Activated CD4-positive, alpha-beta T cell treated with anti-CD3 and anti-CD28 coated beads for 36 hours (primary cell): ENCODE measurements at regions of chr12 and their contacts with region 1.

Region 1: DNA sequence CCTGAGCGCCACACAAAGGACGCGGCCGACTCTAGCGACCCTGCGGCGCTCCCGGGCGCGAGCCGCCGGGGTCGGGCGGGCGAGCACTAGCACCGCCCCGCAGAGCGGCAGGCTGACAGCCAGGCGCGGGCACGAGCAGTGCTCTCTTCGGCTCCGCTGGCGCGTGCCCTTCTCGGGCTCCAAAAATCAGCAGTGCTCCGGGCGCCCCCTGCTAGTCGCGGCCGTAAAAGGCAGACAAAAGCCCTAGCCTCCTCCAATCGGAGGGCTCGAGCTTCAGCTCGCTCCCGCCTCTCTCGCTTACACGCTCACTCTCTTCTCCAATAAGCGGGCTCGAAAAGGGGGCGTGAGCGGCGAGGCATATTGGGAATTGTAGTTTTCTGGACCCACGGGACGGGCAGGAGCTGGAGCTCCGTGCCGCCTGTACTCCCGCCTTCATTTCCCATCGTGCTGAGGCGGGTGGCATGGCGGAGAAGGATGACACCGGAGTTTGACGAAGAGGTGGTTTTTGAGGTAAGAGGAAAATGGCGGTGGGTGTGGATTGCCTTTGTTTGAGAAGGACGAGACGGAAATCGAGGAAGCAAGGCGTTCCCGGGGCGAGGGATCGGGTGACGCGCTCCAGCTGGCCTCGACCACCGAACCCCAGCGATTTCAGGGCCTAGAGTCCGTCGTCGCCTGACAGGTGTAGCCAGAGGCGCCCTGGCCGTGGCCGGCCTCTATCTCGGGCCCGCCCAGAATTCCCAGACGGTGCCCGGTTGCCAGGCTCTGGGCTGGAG is at the starts of genes FGD6 and VEZT:
- DNase-seq: peak; percentile 98
- ATAC-seq: peak; percentile 95
- H3K4me3 Mint-ChIP-seq: peak within 1 kb of the TSS; percentile 86
- H3K27ac Mint-ChIP-seq: peak within 1 kb of the TSS; percentile 93
- H3K4me1 Mint-ChIP-seq: peaks cover 31% of the 10 kb centered on the region
- H3K27me3 Mint-ChIP-seq: peaks cover 3% of the 10 kb centered on the region
- total RNA-seq, gene FGD6: 1.1 to 1.3 TPM
- total RNA-seq, gene VEZT: 55.8 to 72.7 TPM

Region 2: DNA sequence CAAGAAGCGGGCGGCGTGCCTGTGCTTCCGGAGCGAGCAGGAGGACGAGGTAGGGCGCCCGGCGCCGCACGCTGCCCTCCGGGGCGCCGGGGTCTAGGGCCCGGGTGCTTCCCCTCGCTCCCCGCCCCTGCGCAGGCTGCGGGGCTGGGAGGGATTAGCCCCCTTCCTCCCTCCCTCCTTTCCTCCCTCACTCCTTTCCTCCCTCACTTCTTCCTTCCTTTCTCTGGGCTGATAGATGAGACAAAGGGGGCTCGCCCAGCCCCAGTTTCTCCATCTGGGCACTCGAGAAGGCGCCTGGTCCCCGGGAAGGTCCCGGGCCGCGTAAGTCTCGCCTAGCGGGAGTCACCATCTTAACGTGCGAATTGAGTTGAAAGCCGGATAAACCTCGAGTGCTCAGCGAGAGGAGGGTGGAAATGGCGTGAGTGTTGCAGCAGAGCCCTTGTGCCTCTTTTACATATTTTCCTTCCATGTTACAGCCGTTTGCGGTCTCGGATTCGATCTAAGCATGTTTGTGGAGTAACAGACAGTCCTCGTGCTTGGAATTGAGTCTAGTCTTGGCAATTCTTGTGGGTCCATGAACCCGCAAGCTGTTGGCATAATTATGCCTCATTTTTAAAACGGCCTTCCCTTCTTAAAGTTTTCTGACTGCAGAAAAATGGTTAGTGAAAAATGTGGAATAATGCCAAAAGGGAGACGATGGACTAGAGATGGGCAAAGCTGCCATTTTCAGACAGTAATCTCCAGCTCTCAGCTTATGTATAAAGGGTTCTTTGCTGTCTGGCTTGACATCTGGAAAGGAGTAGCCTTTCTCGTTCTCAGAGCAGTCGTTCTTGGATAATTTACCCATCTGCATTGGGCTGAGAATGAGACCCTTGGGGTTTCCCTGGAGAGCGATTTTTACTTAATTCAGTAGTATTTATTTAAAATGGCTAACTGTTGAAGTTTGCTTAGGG is 1838.9 kb before region 1 on chr12:
- CTCF ChIA-PET with region 1: no interaction called
- POLR2A ChIA-PET with region 1: no interaction called
- intact Hi-C with region 1: loop called in 1 of 2 experiments (anchors 5 kb)
- DNase-seq: peak; percentile 76
- ATAC-seq: peak; percentile 66
- H3K4me3 Mint-ChIP-seq: peak overlapping the region; percentile 98
- H3K27ac Mint-ChIP-seq: peak overlapping the region; percentile 99
- H3K4me1 Mint-ChIP-seq: peaks cover 42% of the 10 kb centered on the region
- H3K27me3 Mint-ChIP-seq: no peaks in the 10 kb centered on the region

Region 3: GRCh38 chr12:95072900-95073697 is 144.5 kb before region 1 on chr12 and contains the start of gene NR2C1:
- CTCF ChIA-PET with region 1: no interaction called
- POLR2A ChIA-PET with region 1: interaction called, 6 read pairs
- intact Hi-C with region 1: loop called (anchors 1 to 2 kb)
- DNase-seq: peak; percentile 95
- ATAC-seq: peak; percentile 99
- H3K4me3 Mint-ChIP-seq: peak within 1 kb of the TSS; percentile 84
- H3K27ac Mint-ChIP-seq: peak within 1 kb of the TSS; percentile 82
- H3K4me1 Mint-ChIP-seq: peaks cover 12% of the 10 kb centered on the region
- H3K27me3 Mint-ChIP-seq: no peaks in the 10 kb centered on the region
- total RNA-seq, gene NR2C1: 27.6 to 39.3 TPM

Region 4: GRCh38 chr12:95262808-95263207 is 45.2 kb after region 1 on chr12:
- CTCF ChIA-PET with region 1: no interaction called
- POLR2A ChIA-PET with region 1: no interaction called
- intact Hi-C with region 1: no loop called
- DNase-seq: no peak
- ATAC-seq: no peak
- H3K4me3 Mint-ChIP-seq: no peak overlapping the region
- H3K27ac Mint-ChIP-seq: no peak overlapping the region
- H3K4me1 Mint-ChIP-seq: no peaks in the 10 kb centered on the region
- H3K27me3 Mint-ChIP-seq: no peaks in the 10 kb centered on the region

Region 5: GRCh38 chr12:95358111-95359083 is 140.8 kb after region 1 on chr12:
- CTCF ChIA-PET with region 1: no interaction called
- POLR2A ChIA-PET with region 1: no interaction called
- intact Hi-C with region 1: no loop called
- DNase-seq: no peak
- ATAC-seq: no peak
- H3K4me3 Mint-ChIP-seq: no peak overlapping the region
- H3K27ac Mint-ChIP-seq: no peak overlapping the region
- H3K4me1 Mint-ChIP-seq: no peaks in the 10 kb centered on the region
- H3K27me3 Mint-ChIP-seq: peaks cover 1% of the 10 kb centered on the region

Region 6: GRCh38 chr12:95396849-95397468 is 179.4 kb after region 1 on chr12:
- CTCF ChIA-PET with region 1: interaction called, 3 read pairs
- POLR2A ChIA-PET with region 1: no interaction called
- intact Hi-C with region 1: loop called in 1 of 2 experiments (anchors 2 kb)
- DNase-seq: peak; percentile 19
- ATAC-seq: peak; percentile 92
- H3K4me3 Mint-ChIP-seq: no peak overlapping the region
- H3K27ac Mint-ChIP-seq: peak overlapping the region; percentile 48
- H3K4me1 Mint-ChIP-seq: peaks cover 18% of the 10 kb centered on the region
- H3K27me3 Mint-ChIP-seq: peaks cover 11% of the 10 kb centered on the region

Region 7: GRCh38 chr12:95548539-95549391 is 331.2 kb after region 1 on chr12:
- CTCF ChIA-PET with region 1: no interaction called
- POLR2A ChIA-PET with region 1: no interaction called
- intact Hi-C with region 1: loop called in 1 of 2 experiments (anchors 1 kb)
- DNase-seq: peak; percentile 82
- ATAC-seq: peak; percentile 83
- H3K4me3 Mint-ChIP-seq: peak overlapping the region; percentile 84
- H3K27ac Mint-ChIP-seq: peak overlapping the region; percentile 56
- H3K4me1 Mint-ChIP-seq: peaks cover 37% of the 10 kb centered on the region
- H3K27me3 Mint-ChIP-seq: peaks cover 16% of the 10 kb centered on the region

Region 8: GRCh38 chr12:96035278-96036236 is 818.0 kb after region 1 on chr12 and contains the start of gene LTA4H:
- CTCF ChIA-PET with region 1: no interaction called
- POLR2A ChIA-PET with region 1: no interaction called
- intact Hi-C with region 1: loop called in 1 of 2 experiments (anchors 2 kb)
- DNase-seq: peak; percentile 98
- ATAC-seq: peak; percentile 95
- H3K4me3 Mint-ChIP-seq: no peak within 1 kb of the TSS
- H3K27ac Mint-ChIP-seq: no peak within 1 kb of the TSS
- H3K4me1 Mint-ChIP-seq: peaks cover 13% of the 10 kb centered on the region
- H3K27me3 Mint-ChIP-seq: no peaks in the 10 kb centered on the region
- total RNA-seq, gene LTA4H: 138 to 147 TPM